HepG2 (cell line): ENCODE measurements at regions of chr14 and their contacts with region 1.

Region 1: GRCh38 chr14:95452176-95452892 is 64.1 kb downstream of the SYNE3 start:
- DNase-seq: peak; percentile 51
- ATAC-seq: peak; percentile 81
- H3K4me3 ChIP-seq: peak overlapping the region in 1 of 3 experiments; percentile 55; a peak in 2 of 6 replicates
- H3K27ac ChIP-seq: peak overlapping the region; percentile 81
- H3K4me1 ChIP-seq: peaks cover 39% of the 10 kb centered on the region
- H3K27me3 ChIP-seq: no peaks in the 10 kb centered on the region
- CTCF ChIP-seq: peak; percentile 67
- EP300 ChIP-seq: no peak
- POLR2A ChIP-seq: no peak
- RAD21 ChIP-seq: no peak

Region 2: GRCh38 chr14:95413289-95414215 is 38.8 kb before region 1 on chr14:
- CTCF ChIA-PET with region 1: no interaction called
- POLR2A ChIA-PET with region 1: no interaction called
- in situ Hi-C with region 1: no loop called
- intact Hi-C with region 1: no loop called
- DNase-seq: no peak
- ATAC-seq: no peak
- H3K4me3 ChIP-seq: no peak overlapping the region
- H3K27ac ChIP-seq: no peak overlapping the region
- H3K4me1 ChIP-seq: no peaks in the 10 kb centered on the region
- H3K27me3 ChIP-seq: no peaks in the 10 kb centered on the region
- CTCF ChIP-seq: no peak
- EP300 ChIP-seq: no peak
- POLR2A ChIP-seq: no peak
- RAD21 ChIP-seq: no peak

Region 3: DNA sequence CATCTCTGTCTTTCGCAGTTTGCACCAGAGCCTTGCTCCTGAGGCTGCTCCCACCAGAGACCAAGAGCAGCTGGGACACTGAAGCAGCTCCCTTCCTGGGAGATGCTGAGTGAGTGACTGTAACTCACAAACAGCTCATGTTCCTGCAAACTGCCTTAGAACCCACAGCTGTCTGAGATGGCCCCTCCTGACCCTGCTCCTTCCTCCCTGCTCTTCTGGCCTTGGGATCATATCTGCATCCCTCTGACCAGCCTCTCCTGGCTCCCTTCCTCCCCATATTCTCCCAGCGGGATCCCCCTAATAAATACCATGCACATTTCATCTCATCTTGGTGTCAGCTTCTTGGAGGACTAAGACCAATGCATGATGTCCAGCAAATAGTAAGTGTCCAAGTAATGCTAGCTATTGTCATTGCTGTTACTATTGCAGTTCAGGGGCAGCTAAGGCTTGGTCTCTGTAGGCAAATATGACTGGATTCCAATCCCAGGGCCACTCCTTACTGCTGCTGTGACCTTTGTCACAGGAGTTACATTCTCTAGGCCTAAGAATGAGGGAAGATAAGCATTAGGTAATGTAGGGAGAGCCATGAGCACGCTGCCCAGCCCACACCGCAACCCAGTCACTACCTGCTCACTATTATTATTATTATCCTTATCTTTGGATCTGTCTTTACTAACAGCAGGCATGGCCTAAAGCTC is 16.3 kb after region 1 on chr14:
- CTCF ChIA-PET with region 1: no interaction called
- POLR2A ChIA-PET with region 1: interaction called, 23 read pairs
- in situ Hi-C with region 1: no loop called
- intact Hi-C with region 1: no loop called
- DNase-seq: peak; percentile 84
- ATAC-seq: peak; percentile 95
- H3K4me3 ChIP-seq: no peak overlapping the region; a peak in 1 of 6 replicates
- H3K27ac ChIP-seq: peak overlapping the region; percentile 58
- H3K4me1 ChIP-seq: peaks cover 22% of the 10 kb centered on the region
- H3K27me3 ChIP-seq: no peaks in the 10 kb centered on the region
- CTCF ChIP-seq: no peak
- EP300 ChIP-seq: no peak
- POLR2A ChIP-seq: no peak
- RAD21 ChIP-seq: no peak

Region 4: DNA sequence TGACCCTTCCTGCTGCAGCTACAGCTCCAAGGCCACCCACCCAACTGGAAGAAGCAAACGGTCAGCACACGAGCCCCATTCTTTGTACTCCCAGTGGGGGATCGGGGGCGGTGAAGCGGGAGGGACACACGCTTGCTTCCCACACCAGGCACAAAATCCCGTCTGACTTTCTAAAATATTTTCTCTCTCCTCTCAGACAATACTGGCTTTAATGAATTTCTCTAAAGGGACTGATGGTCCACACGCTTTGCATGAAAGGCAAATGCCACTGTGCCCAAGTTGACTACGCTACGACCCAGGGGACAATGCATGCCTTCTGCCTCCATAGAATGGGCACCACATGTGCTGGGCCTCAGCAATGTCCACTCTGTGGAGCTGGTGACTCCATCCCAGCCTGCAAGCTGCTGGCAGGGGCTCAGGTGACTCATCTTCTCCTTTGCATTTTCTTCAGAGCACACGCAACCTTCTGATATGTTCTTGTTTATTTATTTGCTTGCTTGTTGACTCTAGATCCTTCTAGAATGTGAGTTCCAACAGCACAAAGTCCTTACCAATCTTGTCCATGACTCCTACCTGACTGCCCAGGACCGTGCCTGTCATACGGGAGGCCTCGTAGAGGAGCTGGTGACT is 48.6 kb after region 1 on chr14:
- CTCF ChIA-PET with region 1: no interaction called
- POLR2A ChIA-PET with region 1: interaction called, 7 read pairs
- in situ Hi-C with region 1: no loop called
- intact Hi-C with region 1: loop called (anchors 2 kb)
- DNase-seq: no peak
- ATAC-seq: peak; percentile 51
- H3K4me3 ChIP-seq: peak overlapping the region in 1 of 3 experiments; percentile 43; a peak in 1 of 6 replicates
- H3K27ac ChIP-seq: peak overlapping the region; percentile 43
- H3K4me1 ChIP-seq: peaks cover 83% of the 10 kb centered on the region
- H3K27me3 ChIP-seq: no peaks in the 10 kb centered on the region
- CTCF ChIP-seq: no peak
- EP300 ChIP-seq: no peak; a peak in 1 of 4 replicates
- POLR2A ChIP-seq: no peak
- RAD21 ChIP-seq: no peak

Region 5: DNA sequence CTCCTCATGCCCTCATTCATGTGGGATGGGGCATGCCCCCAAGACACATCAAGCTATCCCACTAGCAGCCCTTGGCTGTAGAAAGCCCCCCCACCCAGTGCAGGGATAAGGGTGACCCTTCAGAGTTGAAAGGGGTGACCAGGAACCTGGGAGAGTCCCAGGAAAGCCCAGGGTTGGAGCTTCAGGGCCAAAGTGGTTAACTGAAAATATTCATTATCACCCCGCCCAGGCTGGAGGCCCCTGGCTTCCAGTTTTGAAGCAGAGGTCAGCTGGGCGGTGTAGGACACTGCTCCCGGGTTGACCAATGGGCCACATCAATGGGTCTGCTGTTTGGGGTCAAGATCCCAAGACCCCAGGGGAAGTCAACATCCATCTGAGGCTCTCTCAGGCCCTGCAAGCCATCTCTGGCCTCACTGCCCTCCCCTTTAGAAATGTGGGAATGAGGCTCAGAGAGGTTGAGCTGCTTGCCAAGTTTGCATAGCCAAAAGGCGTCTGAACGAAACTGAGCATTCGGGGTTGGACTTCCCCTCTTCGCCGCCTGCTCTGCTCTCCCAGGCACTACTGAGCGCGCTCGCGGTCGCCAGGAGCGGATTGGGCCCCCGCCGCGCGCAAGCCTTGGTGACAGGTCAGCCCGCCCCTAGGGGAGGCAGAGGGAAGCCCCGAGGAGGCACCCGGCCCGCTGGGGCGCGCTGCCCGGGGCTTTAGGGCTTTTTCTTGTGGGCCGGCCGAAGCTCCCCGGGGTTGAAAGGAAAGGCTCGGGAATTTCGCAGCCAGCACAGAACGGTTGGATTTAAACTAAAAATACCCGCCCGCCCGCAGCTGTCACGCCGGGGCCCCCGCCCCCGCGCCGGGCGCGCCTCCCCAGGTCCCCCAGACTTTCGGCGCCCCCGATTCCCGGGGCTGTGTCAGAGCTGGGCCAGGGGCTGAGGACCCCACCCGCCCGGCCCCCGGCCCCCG is 63.5 kb after region 1 on chr14:
- CTCF ChIA-PET with region 1: no interaction called
- POLR2A ChIA-PET with region 1: interaction called, 14 read pairs
- in situ Hi-C with region 1: no loop called
- intact Hi-C with region 1: no loop called
- DNase-seq: peak; percentile 39
- ATAC-seq: peak; percentile 92
- H3K4me3 ChIP-seq: peak overlapping the region; percentile 62 to 73 (median 62)
- H3K27ac ChIP-seq: peak overlapping the region; percentile 59
- H3K4me1 ChIP-seq: peaks cover 70% of the 10 kb centered on the region
- H3K27me3 ChIP-seq: no peaks in the 10 kb centered on the region; a peak in 1 of 5 replicates
- CTCF ChIP-seq: peak; percentile 51
- EP300 ChIP-seq: peak in 1 of 2 experiments; percentile 16; a peak in 1 of 4 replicates
- POLR2A ChIP-seq: no peak
- RAD21 ChIP-seq: peak; percentile 54; the same call in 1 of the 2 replicates

Region 6: GRCh38 chr14:95527387-95528002 is 75.2 kb after region 1 on chr14:
- CTCF ChIA-PET with region 1: interaction called, 4 read pairs
- POLR2A ChIA-PET with region 1: interaction called, 104 read pairs
- in situ Hi-C with region 1: no loop called
- intact Hi-C with region 1: no loop called
- DNase-seq: peak; percentile 36
- ATAC-seq: no peak
- H3K4me3 ChIP-seq: no peak overlapping the region
- H3K27ac ChIP-seq: peak overlapping the region; percentile 99
- H3K4me1 ChIP-seq: peaks cover 91% of the 10 kb centered on the region
- H3K27me3 ChIP-seq: no peaks in the 10 kb centered on the region
- CTCF ChIP-seq: peak; percentile 64
- EP300 ChIP-seq: no peak
- POLR2A ChIP-seq: no peak
- RAD21 ChIP-seq: 0 out of 2 replicates have a peak, but pooled peaks have one; percentile 36

Region 7: DNA sequence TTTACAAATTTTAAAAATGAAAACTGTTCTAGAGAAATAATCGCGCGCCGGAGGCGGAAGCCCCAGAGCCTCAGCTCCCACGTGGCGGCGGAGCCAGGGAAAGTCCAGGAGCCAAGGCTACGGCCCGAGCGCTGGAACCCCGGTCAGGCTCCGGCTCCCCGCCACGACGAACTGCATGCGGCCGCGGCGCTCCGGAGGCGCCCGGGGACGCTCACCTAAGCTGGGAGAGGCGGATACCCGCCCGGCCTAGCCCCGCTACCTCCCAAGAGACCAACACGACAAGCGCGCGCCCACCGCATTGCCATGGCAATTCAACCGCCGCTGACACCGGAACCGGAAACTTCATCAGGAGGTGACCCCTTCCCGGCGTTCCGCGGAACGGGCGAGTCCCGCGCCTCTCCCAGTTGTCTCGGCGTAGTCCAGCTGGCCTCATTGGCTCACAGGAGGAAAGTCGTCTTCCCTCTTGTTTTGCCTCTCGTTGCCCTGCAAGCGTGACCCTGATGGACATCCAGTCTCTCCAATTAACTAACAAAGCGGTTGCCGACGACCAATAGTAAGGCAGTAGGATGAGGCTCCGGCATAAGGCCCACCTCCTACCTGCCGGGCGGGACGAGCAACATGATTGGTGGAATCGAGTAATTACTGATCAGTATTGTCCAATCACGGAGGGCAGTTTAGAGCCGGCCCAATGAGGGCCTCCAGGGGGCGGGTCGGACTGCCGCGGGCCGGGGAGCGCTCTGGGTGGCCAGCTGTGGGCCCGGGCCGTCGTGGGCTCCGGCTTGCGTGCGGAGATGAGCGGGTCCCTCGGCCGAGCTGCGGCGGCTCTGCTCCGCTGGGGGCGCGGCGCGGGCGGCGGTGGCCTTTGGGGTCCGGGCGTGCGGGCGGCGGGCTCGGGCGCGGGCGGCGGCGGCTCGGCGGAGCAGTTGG is 82.2 kb after region 1 on chr14 and contains the start of gene GLRX5:
- CTCF ChIA-PET with region 1: no interaction called
- POLR2A ChIA-PET with region 1: interaction called, 42 read pairs
- in situ Hi-C with region 1: no loop called
- intact Hi-C with region 1: no loop called
- DNase-seq: peak; percentile 100
- ATAC-seq: peak; percentile 93
- H3K4me3 ChIP-seq: peak within 1 kb of the TSS; percentile 84 to 96 (median 88)
- H3K27ac ChIP-seq: peak within 1 kb of the TSS; percentile 87
- H3K4me1 ChIP-seq: peaks cover 49% of the 10 kb centered on the region
- H3K27me3 ChIP-seq: peaks cover 0 to 2% of the 10 kb centered on the region in 2 experiments; a peak in 1 of 5 replicates
- CTCF ChIP-seq: no peak
- EP300 ChIP-seq: peak in 1 of 2 experiments; percentile 13; a peak in 2 of 4 replicates
- POLR2A ChIP-seq: peak; percentile 62 to 74
- RAD21 ChIP-seq: peak; percentile 35; the same call in 1 of the 2 replicates
- total RNA-seq, gene GLRX5: 115 and 122 TPM in 2 replicates

Region 8: GRCh38 chr14:95545179-95546168 is 93.1 kb after region 1 on chr14:
- CTCF ChIA-PET with region 1: no interaction called
- POLR2A ChIA-PET with region 1: interaction called, 14 read pairs
- in situ Hi-C with region 1: no loop called
- intact Hi-C with region 1: no loop called
- DNase-seq: no peak
- ATAC-seq: no peak
- H3K4me3 ChIP-seq: no peak overlapping the region
- H3K27ac ChIP-seq: no peak overlapping the region
- H3K4me1 ChIP-seq: peaks cover 75% of the 10 kb centered on the region
- H3K27me3 ChIP-seq: no peaks in the 10 kb centered on the region
- CTCF ChIP-seq: no peak
- EP300 ChIP-seq: no peak
- POLR2A ChIP-seq: no peak
- RAD21 ChIP-seq: no peak